Heart left ventricle (tissue), 16 donors: ENCODE measurements at regions of chr15 and their contacts with region 1.

Region 1: GRCh38 chr15:74373731-74374647 is 6.5 kb upstream of the CYP11A1 start:
- DNase-seq: peak; percentile 91 to 94 (median 94)
- ATAC-seq: peak; percentile 95 to 99 (median 97)
- H3K4me3 ChIP-seq: peak overlapping the region; percentile 28 to 74 (median 60)
- H3K27ac ChIP-seq: peak overlapping the region in 2 of 12 donors; percentile 26 to 48
- H3K4me1 ChIP-seq: peaks cover 0 to 21% (median 13%) of the 10 kb centered on the region in 12 donors
- H3K27me3 ChIP-seq: peaks cover 0 to 5% (median 0%) of the 10 kb centered on the region in 9 donors
- CTCF ChIP-seq: peak; percentile 82 to 94 (median 88)
- POLR2A ChIP-seq: no peak

Region 2: DNA sequence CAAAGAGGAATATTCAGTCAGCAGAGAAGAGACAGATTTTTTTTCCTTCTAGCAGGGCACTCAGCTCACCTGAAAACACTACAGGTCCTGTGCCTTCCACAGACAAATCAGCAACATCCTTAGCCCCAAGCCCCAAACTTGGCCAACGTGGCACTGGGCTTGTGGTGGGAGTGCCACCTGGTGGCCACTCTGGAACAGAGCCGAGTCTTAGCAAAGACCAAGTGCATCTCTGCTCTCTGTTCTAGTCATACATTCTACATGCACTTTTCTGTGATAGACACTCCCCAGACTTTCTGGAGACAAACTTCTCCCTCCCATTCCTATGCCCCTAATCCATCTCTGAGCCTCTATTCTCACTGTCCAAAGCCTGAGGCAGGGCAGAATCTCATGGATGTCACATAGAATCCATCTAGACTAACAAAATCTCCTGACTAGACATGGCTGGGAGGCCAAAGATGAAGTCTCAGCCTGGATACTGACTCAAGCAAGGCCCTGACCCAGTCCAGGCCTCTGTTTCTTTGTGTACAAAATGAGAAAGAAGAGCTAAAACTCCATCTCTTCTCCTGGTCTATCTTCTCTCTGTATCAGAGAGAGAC is 64.8 kb after region 1 on chr15:
- intact Hi-C with region 1: loop called in 1 of 10 experiments (anchors 2 kb)
- DNase-seq: peak; percentile 62 to 83 (median 68)
- ATAC-seq: peak; percentile 39 to 69 (median 66)
- H3K4me3 ChIP-seq: no peak overlapping the region
- H3K27ac ChIP-seq: no peak overlapping the region
- H3K4me1 ChIP-seq: peaks cover 0 to 20% (median 8%) of the 10 kb centered on the region in 12 donors
- H3K27me3 ChIP-seq: no peaks in the 10 kb centered on the region
- CTCF ChIP-seq: peak; percentile 87 to 98 (median 90)
- POLR2A ChIP-seq: no peak

Region 3: DNA sequence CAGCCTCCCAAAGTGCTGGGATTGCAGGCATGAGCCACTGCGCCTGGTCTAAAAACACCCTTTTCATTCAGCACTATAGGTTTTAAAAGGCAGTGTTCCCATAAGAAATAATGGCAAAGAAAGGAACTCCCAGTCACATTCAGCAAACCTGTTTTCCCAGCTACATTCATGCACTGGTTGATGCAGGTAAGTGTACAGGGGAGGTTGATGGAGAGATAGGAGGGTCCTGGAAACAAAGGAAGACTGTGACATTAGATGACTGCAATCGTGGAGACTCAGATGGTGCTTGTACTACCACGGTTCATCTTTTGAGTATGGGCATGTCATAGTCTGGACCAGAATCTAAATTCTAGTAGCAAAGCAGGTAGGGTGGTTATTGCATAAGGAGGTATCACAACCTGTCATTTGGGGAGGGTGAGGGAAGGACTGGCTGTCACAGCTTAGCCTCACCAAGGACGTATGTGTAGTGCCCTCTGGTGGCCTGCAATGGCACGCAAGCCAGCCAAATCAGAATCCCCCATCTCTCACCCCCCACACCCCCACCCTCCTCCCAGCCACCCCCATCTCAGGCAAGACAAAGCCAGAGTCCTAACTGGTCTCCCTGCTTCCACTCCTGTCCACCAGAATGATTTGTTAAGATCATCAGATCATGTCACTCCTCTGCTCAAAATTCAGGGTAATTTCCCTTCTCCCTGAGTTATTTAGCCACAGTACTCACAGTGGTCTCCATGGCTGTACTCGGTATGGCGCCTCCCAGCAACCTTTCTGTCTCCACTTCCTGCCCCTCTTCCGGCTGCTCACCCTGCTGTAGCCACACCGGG is 115.7 kb after region 1 on chr15:
- intact Hi-C with region 1: loop called in 9 of 10 experiments (anchors 1 to 5 kb)
- DNase-seq: peak in 4 of 5 donors; percentile 18 to 35 (median 28)
- ATAC-seq: peak in 3 of 4 donors; percentile 58 to 62 (median 60)
- H3K4me3 ChIP-seq: no peak overlapping the region
- H3K27ac ChIP-seq: no peak overlapping the region
- H3K4me1 ChIP-seq: no peaks in the 10 kb centered on the region
- H3K27me3 ChIP-seq: no peaks in the 10 kb centered on the region
- CTCF ChIP-seq: peak; percentile 51 to 72 (median 62)
- POLR2A ChIP-seq: no peak

Region 4: GRCh38 chr15:74620636-74621545 is 246.9 kb after region 1 on chr15:
- intact Hi-C with region 1: loop called in 1 of 10 experiments (anchors 5 kb)
- DNase-seq: peak in 4 of 5 donors; percentile 55 to 81 (median 74)
- ATAC-seq: peak; percentile 47 to 61 (median 56)
- H3K4me3 ChIP-seq: no peak overlapping the region
- H3K27ac ChIP-seq: peak overlapping the region in 1 of 12 donors; percentile 14
- H3K4me1 ChIP-seq: peaks cover 3 to 58% (median 40%) of the 10 kb centered on the region in 12 donors
- H3K27me3 ChIP-seq: no peaks in the 10 kb centered on the region
- CTCF ChIP-seq: peak; percentile 49 to 87 (median 68)
- POLR2A ChIP-seq: no peak

Region 5: DNA sequence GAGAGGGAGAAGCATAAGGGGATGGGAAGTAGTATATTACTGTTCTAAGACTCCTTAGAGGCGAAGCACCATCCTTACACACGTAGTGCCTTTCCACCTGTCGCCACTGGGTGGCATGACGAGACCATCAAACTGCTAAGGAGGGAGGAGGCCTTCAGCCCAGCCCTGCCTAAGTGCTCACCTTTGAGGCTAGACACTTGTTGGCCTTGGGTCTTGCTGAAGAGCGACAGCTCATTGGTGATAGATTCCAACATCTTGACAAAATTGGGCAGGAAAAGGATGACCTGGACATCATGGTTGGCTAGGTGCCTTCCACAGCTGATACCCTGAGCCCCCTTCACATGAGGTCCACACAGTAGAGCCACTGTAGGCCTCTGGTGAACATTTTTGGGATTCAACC is 261.2 kb after region 1 on chr15:
- intact Hi-C with region 1: loop called (anchors 2 to 5 kb)
- DNase-seq: peak in 1 of 5 donors; percentile 67
- ATAC-seq: peak; percentile 60 to 77 (median 74)
- H3K4me3 ChIP-seq: no peak overlapping the region
- H3K27ac ChIP-seq: no peak overlapping the region
- H3K4me1 ChIP-seq: peaks cover 0 to 3% (median 0%) of the 10 kb centered on the region in 12 donors
- H3K27me3 ChIP-seq: no peaks in the 10 kb centered on the region
- CTCF ChIP-seq: peak; percentile 65 to 90 (median 86)
- POLR2A ChIP-seq: no peak

Region 6: DNA sequence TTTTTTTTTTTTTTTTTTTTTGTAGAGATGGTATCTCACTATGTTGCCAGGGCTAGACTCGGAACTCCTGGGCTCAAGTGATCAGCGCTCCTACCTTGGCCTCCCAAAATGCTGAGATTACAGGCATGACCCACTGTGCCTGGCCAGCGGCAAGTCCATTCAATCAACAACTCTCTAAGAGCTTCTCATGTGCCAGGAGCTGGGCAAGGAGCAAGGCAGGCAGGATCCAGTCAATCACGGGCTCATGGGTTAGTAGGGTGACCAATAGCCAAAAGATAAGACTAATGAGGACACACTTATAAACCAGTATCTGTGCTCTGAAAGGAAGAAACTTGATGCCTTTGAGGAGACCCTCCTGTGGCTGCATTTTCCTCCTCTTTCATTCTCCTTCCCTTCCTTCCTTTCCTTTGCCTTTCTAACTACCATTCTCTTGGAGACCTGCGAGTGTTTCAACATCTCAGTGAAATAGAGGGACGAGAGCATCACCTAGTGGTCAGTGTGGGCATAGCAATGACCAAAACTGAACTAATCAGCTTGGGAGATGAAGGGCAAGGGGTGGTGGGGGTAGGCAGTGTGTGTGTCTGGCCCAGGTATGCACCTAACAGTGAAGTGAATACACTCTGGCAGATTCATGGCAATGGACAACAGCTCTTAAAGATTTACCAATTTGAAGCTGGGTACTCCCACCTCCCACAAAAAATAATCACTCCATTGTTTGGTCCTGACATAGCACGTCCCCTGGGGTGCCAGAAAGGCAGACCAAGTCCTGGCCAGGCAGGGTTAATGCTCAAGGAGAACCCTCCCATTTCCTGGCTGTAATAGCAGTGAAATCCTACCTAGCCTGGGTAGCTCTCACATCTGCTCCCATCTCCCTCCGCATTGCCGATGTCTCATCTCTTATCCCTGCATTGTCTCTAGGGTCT is 576.4 kb after region 1 on chr15:
- intact Hi-C with region 1: loop called in 1 of 10 experiments (anchors 10 kb)
- DNase-seq: peak in 4 of 5 donors; percentile 55 to 70 (median 56)
- ATAC-seq: peak in 3 of 4 donors; percentile 68 to 83 (median 77)
- H3K4me3 ChIP-seq: no peak overlapping the region
- H3K27ac ChIP-seq: no peak overlapping the region
- H3K4me1 ChIP-seq: peaks cover 0 to 19% (median 9%) of the 10 kb centered on the region in 12 donors
- H3K27me3 ChIP-seq: no peaks in the 10 kb centered on the region
- CTCF ChIP-seq: peak; percentile 92 to 98 (median 95)
- POLR2A ChIP-seq: no peak